ENCODE measurements at regions of chr11 and their contacts with region 1.

Region 1: GRCh38 chr11:61153593-61154095 is 7.6 kb downstream of the VPS37C start:
- DNase-seq: no peak
- H3K4me3 ChIP-seq: no peak overlapping the region
- H3K27ac ChIP-seq: peak overlapping the region; percentile 73 to 82 (median 77)
- H3K4me1 ChIP-seq: peaks cover 45 to 83% (median 70%) of the 10 kb centered on the region in 4 donors
- H3K27me3 ChIP-seq: no peaks in the 10 kb centered on the region
- CTCF ChIP-seq: no peak
- EP300 ChIP-seq: no peak
- POLR2A ChIP-seq: no peak

Region 2: DNA sequence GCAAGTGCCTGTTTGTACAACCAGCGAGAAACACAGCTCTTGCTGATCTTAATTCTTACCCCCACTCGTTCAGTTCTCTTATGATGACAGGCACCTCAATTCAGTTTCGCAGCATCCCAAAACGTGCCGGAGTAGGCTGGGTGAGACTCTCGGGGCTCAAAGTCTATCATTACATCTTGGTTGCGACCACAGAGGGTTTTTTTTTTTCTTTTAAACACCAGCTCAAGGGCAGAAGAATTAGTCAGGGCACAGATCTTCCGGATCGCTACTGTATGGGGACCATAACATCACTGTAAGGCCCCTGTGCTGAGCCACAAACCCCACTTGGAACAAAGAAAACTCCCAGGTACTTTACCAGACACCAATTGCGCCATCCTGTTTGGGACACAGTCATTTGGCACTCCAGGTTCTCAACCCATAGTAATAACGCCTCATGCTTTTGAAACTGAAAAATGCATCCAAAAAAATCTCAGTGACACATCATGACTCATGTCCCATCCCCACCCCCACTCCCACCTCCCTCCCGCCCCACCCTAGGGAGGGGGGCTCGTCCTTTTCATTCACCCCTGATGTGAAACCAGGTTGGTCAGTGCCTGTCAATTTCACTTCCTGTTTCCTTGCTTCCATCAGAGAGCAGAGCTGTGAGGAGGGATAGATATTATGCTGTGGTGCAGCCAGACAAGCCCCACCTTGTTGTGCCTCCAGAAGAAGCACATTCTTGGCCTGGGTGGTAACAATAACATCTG is 92.4 kb before region 1 on chr11:
- in situ Hi-C with region 1: no loop called
- intact Hi-C with region 1: no loop called
- DNase-seq: no peak
- H3K4me3 ChIP-seq: no peak overlapping the region
- H3K27ac ChIP-seq: no peak overlapping the region
- H3K4me1 ChIP-seq: no peaks in the 10 kb centered on the region
- H3K27me3 ChIP-seq: no peaks in the 10 kb centered on the region
- CTCF ChIP-seq: no peak
- EP300 ChIP-seq: no peak
- POLR2A ChIP-seq: no peak

Region 3: DNA sequence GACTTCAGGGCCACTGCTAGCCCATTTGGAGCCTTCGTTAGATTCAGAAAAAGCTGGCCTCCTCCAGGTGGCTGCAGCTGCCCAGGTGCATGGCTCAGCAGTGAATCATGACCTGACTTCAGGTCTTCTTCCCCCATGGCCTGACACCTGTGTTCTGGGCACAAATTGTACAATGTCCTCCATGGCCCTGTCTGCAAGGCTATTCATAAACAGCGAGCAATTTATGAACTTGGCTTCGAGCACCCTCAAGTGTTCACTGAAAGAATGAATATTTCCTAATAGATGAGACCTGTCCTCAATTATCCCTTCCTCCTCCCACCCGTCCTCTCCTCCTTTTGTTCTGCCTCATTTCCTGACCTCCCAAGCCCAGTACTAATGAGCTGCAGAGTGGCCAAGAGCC is 19.8 kb after region 1 on chr11:
- in situ Hi-C with region 1: no loop called
- intact Hi-C with region 1: loop called (anchors 1 kb)
- DNase-seq: no peak
- H3K4me3 ChIP-seq: no peak overlapping the region
- H3K27ac ChIP-seq: no peak overlapping the region
- H3K4me1 ChIP-seq: no peaks in the 10 kb centered on the region
- H3K27me3 ChIP-seq: no peaks in the 10 kb centered on the region
- CTCF ChIP-seq: no peak
- EP300 ChIP-seq: no peak
- POLR2A ChIP-seq: no peak